ENCODE measurements at regions of chr7 and their contacts with region 1.

Region 1: DNA sequence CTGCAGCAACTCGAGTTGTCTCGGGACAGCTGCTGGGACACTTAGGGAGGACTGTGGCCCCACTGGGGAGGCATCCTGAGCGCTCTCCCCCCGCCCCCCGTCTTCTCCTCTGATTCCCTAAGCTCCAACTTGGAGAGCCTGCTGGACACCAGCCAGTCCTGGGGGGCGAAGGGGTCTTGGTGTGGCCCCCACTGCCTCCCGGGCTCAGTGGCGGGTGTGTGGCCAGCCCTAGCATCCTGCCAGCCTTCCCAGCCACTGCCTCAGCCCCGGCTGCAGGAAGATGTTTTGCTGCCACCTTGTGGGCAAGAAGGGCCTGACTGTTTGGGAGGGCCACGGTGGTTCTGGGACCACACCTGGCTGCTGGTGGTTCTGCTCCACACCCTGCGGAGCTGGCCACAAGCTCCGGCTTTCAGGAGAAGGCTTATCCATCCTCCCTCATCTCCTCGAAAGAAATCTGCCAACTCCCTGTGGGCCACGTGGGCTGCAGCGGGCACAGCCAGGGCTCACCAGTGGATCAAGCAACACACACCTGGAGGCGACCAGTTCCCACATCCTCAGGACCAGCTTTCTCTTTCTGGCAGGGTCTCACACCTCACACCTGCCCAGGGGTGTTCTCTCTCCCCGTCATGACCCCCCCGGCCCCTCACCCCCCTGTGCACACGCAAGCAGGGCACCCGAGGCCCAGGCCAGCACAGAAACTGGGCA is 24.8 kb downstream of the AGAP3 start:
- DNase-seq: peak; percentile 81
- ATAC-seq: peak; percentile 54
- H3K4me3 ChIP-seq: no peak overlapping the region
- H3K27ac ChIP-seq: no peak overlapping the region
- H3K4me1 ChIP-seq: peaks cover 24% of the 10 kb centered on the region
- H3K27me3 ChIP-seq: no peaks in the 10 kb centered on the region
- CTCF ChIP-seq: peak; percentile 79

Region 2: GRCh38 chr7:150898475-150899011 is 212.6 kb before region 1 on chr7:
- CTCF ChIA-PET with region 1: no interaction called
- POLR2A ChIA-PET with region 1: no interaction called
- intact Hi-C with region 1: loop called (anchors 5 kb)
- DNase-seq: peak; percentile 72
- ATAC-seq: peak; percentile 83
- H3K4me3 ChIP-seq: no peak overlapping the region
- H3K27ac ChIP-seq: no peak overlapping the region
- H3K4me1 ChIP-seq: peaks cover 16% of the 10 kb centered on the region
- H3K27me3 ChIP-seq: no peaks in the 10 kb centered on the region
- CTCF ChIP-seq: peak; percentile 91

Region 3: DNA sequence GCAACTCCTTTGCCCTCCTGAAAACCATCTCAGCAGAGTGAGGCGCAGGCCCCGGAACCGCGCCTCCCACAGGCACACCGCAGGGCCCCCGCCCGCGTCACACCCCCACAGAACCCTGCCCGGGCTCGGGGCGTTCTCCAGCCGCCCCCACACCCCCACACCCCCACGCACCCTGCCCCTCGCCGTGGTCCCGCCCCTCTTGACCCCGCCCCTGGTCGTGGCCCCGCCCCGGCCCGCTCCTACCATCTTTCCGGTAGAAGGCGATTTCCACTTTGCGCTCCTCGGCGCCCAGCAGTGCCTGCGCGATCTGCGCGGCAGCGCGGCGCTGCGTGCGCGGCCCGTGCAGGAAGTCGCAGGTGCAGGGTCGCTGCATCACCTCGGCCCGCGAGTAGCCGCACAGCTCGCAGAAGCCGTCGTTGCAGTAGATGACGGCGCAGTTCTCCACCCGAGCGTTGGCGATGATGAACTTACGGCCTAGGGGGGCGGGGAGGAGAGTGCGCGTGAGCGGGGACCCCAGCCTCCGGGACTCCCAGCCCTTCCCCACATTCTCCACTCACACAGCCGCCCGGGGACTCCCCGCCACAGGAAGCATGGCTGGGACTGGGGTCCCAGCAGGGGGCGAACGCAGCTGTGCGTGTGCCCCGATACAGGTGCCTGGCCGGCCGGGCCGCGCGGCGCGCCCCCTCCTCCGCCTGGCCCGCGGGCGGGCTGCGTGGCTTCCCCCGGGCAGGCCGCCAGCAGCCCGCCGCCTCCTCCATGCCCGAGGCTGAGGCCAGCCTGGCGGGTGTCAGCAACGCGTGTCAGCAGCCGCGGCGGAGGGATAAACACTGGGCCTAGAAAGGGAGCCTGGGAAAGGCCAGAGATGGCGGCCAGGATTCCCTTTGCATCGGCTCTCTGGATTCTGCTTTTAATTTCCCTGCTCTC is 136.4 kb before region 1 on chr7:
- CTCF ChIA-PET with region 1: interaction called, 3 read pairs
- POLR2A ChIA-PET with region 1: no interaction called
- intact Hi-C with region 1: loop called (anchors 10 kb)
- DNase-seq: peak; percentile 36
- ATAC-seq: peak; percentile 53
- H3K4me3 ChIP-seq: peak overlapping the region; percentile 71
- H3K27ac ChIP-seq: no peak overlapping the region
- H3K4me1 ChIP-seq: no peaks in the 10 kb centered on the region; the same call in 1 of the 2 replicates
- H3K27me3 ChIP-seq: peaks cover 11% of the 10 kb centered on the region
- CTCF ChIP-seq: peak; percentile 29; the same call in 1 of the 2 replicates

Region 4: DNA sequence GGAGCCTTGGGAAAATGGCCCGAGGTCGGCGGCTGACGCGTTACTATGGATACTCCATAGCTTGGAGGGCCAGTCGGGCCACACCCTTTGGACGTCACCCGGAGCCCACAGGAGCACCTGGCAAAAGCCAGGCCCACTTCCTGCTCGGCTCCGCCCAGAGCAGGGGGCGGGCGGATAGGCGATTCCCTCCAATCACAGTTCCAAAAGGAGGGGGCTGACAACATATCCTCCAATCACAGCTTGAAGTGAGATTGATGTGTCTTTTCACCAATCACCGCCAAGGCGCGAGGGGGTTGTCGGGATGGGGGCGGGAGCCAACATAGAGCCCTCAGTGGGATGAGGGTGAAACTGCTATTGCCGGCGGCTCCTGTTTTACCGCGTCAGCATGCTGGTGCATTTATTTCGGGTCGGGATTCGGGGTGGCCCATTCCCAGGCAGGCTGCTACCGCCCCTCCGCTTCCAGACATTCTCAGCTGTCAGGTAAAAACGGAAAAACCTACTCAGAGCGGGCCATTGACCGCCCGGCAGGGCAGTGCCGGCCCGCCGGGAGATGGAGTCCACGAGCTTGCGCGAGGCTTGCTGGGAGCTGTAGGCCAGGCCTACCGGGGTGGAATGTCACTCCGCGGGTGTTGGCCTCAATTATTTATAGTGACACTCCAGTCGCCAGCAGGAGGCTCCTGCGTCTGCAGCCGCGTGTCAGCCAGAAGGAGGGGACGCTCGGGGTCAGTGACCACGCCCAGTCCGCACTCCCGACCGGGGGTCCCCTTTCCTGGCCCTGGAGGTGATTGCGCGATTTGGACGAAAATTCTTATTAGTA is 82.8 kb before region 1 on chr7 and contains the start of gene ABCB8:
- CTCF ChIA-PET with region 1: interaction called, 12 read pairs
- POLR2A ChIA-PET with region 1: no interaction called
- intact Hi-C with region 1: loop called (anchors 1 kb)
- DNase-seq: peak; percentile 99
- ATAC-seq: peak; percentile 87
- H3K4me3 ChIP-seq: peak within 1 kb of the TSS; percentile 75
- H3K27ac ChIP-seq: peak within 1 kb of the TSS; percentile 81
- H3K4me1 ChIP-seq: peaks cover 44% of the 10 kb centered on the region
- H3K27me3 ChIP-seq: no peaks in the 10 kb centered on the region
- CTCF ChIP-seq: peak; percentile 60
- total RNA-seq, gene ABCB8: 58.4 and 95.7 TPM in 2 replicates

Region 5: DNA sequence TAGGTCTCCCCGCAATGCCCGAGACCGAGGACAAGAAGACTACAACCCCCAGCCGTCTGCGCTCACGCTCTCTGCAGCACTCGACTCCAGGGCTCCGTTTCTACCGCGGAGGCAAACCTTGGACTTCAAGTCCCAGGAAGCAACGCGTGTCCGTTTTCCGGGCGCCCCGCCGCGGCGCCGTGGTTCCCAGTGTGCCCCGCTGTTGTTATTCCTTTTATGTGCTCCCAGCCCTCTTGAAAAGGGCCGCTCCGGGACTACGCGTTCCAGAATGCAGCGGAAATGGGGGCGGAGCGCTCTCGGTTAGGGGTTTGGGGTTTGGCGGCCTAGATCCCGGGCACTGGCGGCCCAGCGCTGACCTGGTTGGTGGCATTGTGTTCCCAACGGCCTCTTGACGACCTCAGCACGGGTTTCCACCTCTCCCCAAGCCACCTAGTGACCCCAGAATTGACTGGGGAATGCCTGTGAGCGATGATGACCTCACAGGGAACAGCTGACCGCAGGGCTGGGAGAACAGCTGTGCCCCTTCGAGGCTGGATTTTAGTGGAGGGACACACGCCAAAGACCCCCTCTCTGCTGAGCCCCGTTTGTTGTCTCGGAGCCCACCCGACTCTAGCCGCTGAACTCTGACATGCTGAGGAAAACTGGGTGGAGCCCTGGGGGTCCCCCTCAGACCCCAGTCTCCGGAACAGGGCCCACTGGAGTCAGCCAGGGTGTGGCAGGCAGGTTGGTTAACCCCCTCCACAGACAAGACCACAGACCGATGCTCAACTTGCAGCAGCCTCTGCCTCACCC is 52.9 kb before region 1 on chr7:
- CTCF ChIA-PET with region 1: interaction called, 10 read pairs
- POLR2A ChIA-PET with region 1: interaction called, 4 read pairs
- intact Hi-C with region 1: no loop called
- DNase-seq: peak; percentile 98
- ATAC-seq: peak; percentile 80
- H3K4me3 ChIP-seq: peak overlapping the region; percentile 86
- H3K27ac ChIP-seq: peak overlapping the region; percentile 67
- H3K4me1 ChIP-seq: peaks cover 45% of the 10 kb centered on the region
- H3K27me3 ChIP-seq: no peaks in the 10 kb centered on the region
- CTCF ChIP-seq: no peak

Region 6: GRCh38 chr7:151080522-151081169 is 30.4 kb before region 1 on chr7 and contains the start of gene FASTK:
- CTCF ChIA-PET with region 1: interaction called, 6 read pairs
- POLR2A ChIA-PET with region 1: no interaction called
- intact Hi-C with region 1: loop called (anchors 5 kb)
- DNase-seq: peak; percentile 94
- ATAC-seq: peak; percentile 62
- H3K4me3 ChIP-seq: peak within 1 kb of the TSS; percentile 91
- H3K27ac ChIP-seq: peak within 1 kb of the TSS; percentile 65
- H3K4me1 ChIP-seq: peaks cover 39% of the 10 kb centered on the region
- H3K27me3 ChIP-seq: no peaks in the 10 kb centered on the region
- CTCF ChIP-seq: no peak
- total RNA-seq, gene FASTK: 163 and 211 TPM in 2 replicates

Region 7: DNA sequence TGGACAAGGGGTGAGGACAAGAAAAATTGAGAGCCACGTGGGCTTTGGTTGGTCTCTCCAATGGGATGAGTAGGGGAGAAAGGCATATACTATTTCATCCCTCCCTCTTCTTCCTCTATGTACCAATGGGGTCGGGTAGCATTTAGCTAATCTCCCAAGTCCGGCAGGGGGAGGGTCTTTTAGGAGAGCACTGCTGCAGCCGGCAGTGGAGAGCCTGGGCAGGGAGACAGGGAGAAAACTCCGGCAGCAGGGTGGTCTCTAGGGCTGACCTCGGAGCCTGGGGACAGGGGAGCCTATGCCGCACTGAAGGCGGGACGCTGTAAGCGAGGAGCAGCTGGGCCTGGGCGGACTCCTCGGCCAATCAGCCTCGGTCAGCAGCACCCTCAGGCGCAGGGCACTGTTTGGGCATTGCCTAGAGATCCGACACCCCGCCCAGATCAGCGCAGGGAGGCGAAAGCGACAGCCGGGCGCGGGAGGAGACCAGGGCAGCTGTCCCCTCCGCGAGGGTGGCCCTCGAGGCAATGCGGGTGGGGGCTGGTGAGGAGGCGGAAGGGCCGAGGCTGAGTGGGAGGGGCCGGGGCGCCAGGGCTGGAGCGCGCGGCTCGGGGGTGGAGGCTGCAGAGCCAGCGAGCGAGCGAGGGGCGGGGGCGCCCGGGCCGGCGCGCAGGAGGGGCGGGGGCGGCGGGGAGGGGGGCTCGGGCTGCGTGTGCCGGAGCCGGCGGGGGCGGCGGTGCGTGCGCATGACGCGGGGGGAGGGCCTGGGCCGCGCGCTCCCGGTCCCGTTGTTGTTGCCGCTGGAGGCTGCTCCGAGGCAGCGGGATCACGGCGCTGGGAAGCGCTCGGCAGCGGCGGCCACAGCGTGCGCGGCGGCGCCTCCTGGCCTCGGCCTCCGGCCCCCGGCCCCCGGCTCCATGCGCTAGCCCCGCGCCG is 25.1 kb before region 1 on chr7 and contains the start of gene AGAP3:
- CTCF ChIA-PET with region 1: no interaction called
- POLR2A ChIA-PET with region 1: no interaction called
- intact Hi-C with region 1: loop called (anchors 1 kb)
- DNase-seq: peak; percentile 71
- ATAC-seq: peak; percentile 44
- H3K4me3 ChIP-seq: peak within 1 kb of the TSS; percentile 99
- H3K27ac ChIP-seq: peak within 1 kb of the TSS; percentile 42
- H3K4me1 ChIP-seq: peaks cover 54% of the 10 kb centered on the region
- H3K27me3 ChIP-seq: no peaks in the 10 kb centered on the region
- CTCF ChIP-seq: no peak
- total RNA-seq, gene AGAP3: 53.5 and 88.2 TPM in 2 replicates

Region 8: GRCh38 chr7:151251973-151252835 is 141.1 kb after region 1 on chr7:
- CTCF ChIA-PET with region 1: no interaction called
- POLR2A ChIA-PET with region 1: no interaction called
- intact Hi-C with region 1: no loop called
- DNase-seq: peak; percentile 29
- ATAC-seq: peak; percentile 51
- H3K4me3 ChIP-seq: peak overlapping the region; percentile 69
- H3K27ac ChIP-seq: no peak overlapping the region
- H3K4me1 ChIP-seq: peaks cover 4% of the 10 kb centered on the region
- H3K27me3 ChIP-seq: 0 out of 2 replicates have a peak, but pooled peaks cover 3% of the 10 kb centered on the region
- CTCF ChIP-seq: no peak